Breast epithelium (tissue), 4 donors: ENCODE measurements at regions of chr4 and their contacts with region 1.

Region 1: DNA sequence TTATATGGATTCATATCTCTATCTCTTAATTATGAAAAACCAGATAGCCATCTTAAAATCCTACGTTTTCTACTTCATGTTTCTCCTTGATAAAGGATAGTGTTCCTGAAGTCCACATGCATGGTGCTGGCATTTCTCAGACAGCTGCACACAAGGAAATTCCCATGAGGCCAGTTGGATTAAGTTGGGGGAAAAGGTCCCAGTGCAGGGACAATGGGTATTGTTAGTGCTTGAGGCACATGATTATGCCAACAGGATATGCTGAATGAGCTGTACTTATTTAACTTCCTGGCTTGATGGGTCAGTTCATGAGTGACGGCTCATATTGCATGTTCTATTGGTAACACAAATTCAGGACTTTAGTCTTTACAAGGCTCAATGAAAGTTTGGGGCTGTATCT is 913.9 kb upstream of the NDST4 start:
- DNase-seq: no peak
- H3K4me3 ChIP-seq: no peak overlapping the region
- H3K27ac ChIP-seq: no peak overlapping the region
- H3K4me1 ChIP-seq: no peaks in the 10 kb centered on the region
- H3K27me3 ChIP-seq: no peaks in the 10 kb centered on the region
- CTCF ChIP-seq: no peak
- POLR2A ChIP-seq: no peak

Region 2: DNA sequence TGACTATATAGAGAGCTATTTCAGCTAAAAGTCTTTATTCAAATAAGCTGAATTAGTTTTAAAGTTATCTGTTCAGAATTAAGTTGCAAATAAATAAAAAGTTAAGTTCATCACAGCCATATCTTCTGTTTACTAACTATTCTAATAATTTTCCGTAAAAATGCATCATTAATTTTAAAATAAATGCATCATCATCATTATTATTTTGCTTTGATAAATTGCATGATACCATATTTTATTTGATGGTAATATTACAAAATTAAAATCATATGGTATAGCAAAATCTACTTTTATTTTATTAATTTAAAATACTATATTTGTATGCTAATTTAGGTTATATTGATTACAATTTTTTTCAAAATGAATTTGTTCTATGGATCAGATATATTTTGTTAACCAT is 556.5 kb before region 1 on chr4:
- intact Hi-C with region 1: loop called (anchors 10 kb)
- DNase-seq: no peak
- H3K4me3 ChIP-seq: no peak overlapping the region
- H3K27ac ChIP-seq: no peak overlapping the region
- H3K4me1 ChIP-seq: no peaks in the 10 kb centered on the region
- H3K27me3 ChIP-seq: no peaks in the 10 kb centered on the region
- CTCF ChIP-seq: no peak
- POLR2A ChIP-seq: no peak